ENCODE measurements at regions of chr6 and their contacts with region 1.

Region 1: DNA sequence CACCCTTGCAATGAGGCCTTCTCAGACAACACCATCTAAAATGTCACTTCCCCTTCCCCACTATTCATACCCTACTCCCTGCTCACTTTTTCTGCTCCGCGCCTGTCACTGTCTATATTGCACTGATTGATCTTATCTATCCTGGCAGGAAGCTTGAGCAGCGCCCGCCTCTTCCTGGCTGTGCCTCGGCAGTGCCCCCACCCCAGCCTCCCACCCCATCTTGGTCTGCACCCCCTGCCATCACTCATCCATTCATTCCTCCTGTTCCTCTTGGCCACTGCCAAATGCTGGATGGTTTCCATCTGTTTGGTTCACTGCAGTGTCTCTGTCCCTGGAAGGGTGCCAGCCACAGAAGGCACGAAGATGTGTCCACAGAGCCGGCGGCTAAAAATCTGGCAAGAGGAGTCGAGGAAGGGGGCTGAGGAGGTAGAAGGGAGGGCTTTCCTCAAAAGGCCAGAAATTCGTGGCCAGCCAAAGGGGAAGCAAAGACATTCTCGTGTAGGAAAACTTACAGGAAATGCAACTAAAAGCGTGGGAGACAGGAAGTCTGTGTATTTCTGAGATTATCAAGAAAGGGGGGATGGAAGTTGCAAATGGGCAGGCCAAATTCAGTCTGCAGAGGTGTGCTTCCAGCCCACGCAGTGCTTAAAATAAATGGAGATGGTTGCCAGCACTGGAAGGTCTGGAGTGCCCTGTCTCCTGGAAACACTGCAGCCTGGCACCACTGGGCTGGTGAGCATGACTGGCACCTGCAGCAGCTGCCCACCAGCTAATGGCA is 27.6 kb downstream of the SYNJ2 start:
- DNase-seq: no peak
- H3K4me3 ChIP-seq: peak overlapping the region in 1 of 4 donors; percentile 0
- H3K27ac ChIP-seq: peak overlapping the region in 3 of 4 donors; percentile 18 to 49 (median 43)
- H3K4me1 ChIP-seq: peaks cover 8 to 40% (median 8%) of the 10 kb centered on the region in 3 donors
- H3K27me3 ChIP-seq: no peaks in the 10 kb centered on the region
- CTCF ChIP-seq: no peak
- POLR2A ChIP-seq: no peak

Region 2: GRCh38 chr6:158060455-158061360 is 51.4 kb after region 1 on chr6:
- intact Hi-C with region 1: loop called (anchors 10 kb)
- DNase-seq: peak; percentile 13
- H3K4me3 ChIP-seq: peak overlapping the region in 3 of 4 donors; percentile 6 to 24 (median 18)
- H3K27ac ChIP-seq: peak overlapping the region; percentile 80 to 92 (median 88)
- H3K4me1 ChIP-seq: peaks cover 18 to 50% (median 38%) of the 10 kb centered on the region in 3 donors
- H3K27me3 ChIP-seq: no peaks in the 10 kb centered on the region
- CTCF ChIP-seq: no peak
- POLR2A ChIP-seq: peak in 1 of 4 donors; percentile 24

Measured in esophagus squamous epithelium (tissue), 5 donors.